CD14-positive monocyte (primary cell): ENCODE measurements at regions of chr20 and their contacts with region 1.

Region 1: GRCh38 chr20:62143118-62143973 is at the starts of genes PSMA7 and SS18L1:
- DNase-seq: peak; percentile 82 to 89 (median 88)
- H3K4me3 ChIP-seq: peak within 1 kb of the TSS; percentile 60 to 89 (median 69)
- H3K4me3 Mint-ChIP-seq: peak within 1 kb of the TSS; percentile 89 to 94
- H3K27ac ChIP-seq: peak within 1 kb of the TSS; percentile 75 to 89
- H3K27ac Mint-ChIP-seq: peak within 1 kb of the TSS; percentile 90 to 97 (median 94)
- H3K4me1 ChIP-seq: peaks cover 27 to 35% of the 10 kb centered on the region in 2 donors
- H3K4me1 Mint-ChIP-seq: peaks cover 42% of the 10 kb centered on the region
- H3K27me3 ChIP-seq: no peaks in the 10 kb centered on the region
- H3K27me3 Mint-ChIP-seq: no peaks in the 10 kb centered on the region
- CTCF ChIP-seq: no peak
- polyA plus RNA-seq, gene PSMA7: 402 to 668 (median 527) TPM
- polyA plus RNA-seq, gene SS18L1: 0.75 to 16.5 (median 1.1) TPM

Region 2: DNA sequence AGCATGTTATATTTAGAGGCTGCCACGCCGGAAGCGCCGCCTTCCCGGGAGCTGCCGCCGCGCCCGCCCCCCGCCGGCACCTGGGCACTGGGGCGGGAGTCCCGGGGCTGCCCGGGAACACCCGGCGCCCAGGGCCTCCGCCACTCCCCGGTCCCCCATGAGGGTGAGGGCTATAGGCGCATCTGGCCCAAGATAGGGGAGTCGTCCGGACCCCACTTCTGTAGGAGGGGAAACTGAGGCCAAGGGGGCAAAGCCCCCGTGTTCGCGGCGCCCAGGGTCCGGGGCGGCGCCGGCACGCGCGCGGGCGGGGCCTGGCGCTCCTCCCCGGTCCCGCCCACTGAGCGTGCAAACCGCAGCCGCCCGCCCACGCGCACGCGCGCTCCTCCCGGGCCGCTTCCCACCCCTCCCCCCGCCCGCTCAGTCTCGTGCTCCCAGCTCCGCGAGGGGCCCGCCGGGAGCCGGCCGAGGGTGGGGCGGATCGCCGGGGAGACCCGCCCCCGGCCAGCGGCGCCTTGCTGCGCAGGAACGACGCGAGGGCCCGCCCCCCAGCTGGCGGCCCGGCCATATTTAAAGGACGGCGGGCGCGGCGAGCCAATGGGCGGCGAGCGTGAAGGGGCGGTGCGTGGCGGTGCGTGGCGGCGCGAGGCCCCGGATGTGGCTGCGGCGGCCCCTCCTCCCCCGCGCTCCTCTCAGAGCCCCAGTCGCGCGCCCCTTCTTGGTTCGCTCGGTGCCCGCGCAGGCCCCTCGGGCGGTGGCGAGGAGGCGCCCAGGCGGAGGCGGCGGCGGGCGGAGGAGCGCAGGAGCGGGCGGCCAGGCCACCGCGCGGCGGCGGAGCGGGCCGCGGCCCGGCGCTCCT is 21.3 kb before region 1 on chr20 and contains the start of gene LSM14B:
- intact Hi-C with region 1: loop called in 1 of 2 experiments (anchors 2 kb)
- DNase-seq: peak; percentile 94 to 97 (median 96)
- H3K4me3 ChIP-seq: peak within 1 kb of the TSS; percentile 52 to 87 (median 71)
- H3K4me3 Mint-ChIP-seq: peak within 1 kb of the TSS; percentile 85 to 93
- H3K27ac ChIP-seq: peak within 1 kb of the TSS; percentile 65 to 94
- H3K27ac Mint-ChIP-seq: peak within 1 kb of the TSS; percentile 88 to 95 (median 93)
- H3K4me1 ChIP-seq: peaks cover 17 to 27% of the 10 kb centered on the region in 2 donors
- H3K4me1 Mint-ChIP-seq: peaks cover 19% of the 10 kb centered on the region
- H3K27me3 ChIP-seq: peaks cover 0 to 5% of the 10 kb centered on the region in 2 donors
- H3K27me3 Mint-ChIP-seq: peaks cover 9 to 24% (median 18%) of the 10 kb centered on the region in 3 donors
- CTCF ChIP-seq: no peak
- polyA plus RNA-seq, gene LSM14B: 1.0 to 33.5 (median 1.4) TPM

Region 3: DNA sequence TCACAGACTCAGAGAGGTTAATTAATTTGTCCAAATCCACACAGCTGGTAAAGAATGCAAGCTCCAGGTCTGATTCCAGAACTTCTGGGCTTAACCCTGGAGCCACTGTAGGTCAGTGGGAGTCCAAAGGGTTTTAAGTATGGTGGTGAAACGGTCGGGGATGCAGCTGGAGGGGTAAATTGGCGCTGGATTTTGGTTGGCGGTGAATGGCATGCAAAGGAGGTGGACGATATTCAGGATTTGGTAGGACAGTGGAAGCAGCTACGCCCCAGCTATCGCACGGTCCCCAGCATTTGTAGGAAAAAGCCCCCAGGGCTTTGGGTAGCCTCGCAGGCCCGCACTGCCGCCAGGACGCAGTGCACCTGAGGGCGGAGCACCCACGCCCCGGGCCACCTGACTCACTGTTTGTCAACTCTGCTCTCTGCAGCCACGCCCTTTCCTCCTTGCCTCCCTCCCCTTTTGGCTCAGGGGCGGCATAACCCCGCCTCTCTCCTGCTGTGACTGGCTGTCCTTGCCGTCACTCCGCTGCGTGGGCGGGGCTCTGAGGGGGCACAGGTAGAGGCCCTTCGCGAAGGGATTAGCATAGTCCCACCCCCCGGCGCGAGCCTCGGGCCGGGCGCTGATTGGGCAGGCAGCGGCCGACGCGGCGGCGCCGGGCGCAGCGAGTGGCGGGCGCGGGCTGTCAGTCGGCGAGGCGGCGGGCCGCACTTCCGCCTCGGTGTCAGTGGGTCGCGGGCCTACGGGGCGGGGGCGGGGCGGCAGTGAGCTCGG is 94.6 kb after region 1 on chr20 and contains the start of gene OSBPL2:
- intact Hi-C with region 1: loop called in 1 of 2 experiments (anchors 5 kb)
- DNase-seq: peak; percentile 97 to 99 (median 99)
- H3K4me3 ChIP-seq: peak within 1 kb of the TSS; percentile 64 to 82 (median 70)
- H3K4me3 Mint-ChIP-seq: peak within 1 kb of the TSS; percentile 82 to 93
- H3K27ac ChIP-seq: peak within 1 kb of the TSS; percentile 32 to 79
- H3K27ac Mint-ChIP-seq: peak within 1 kb of the TSS; percentile 71 to 93 (median 83)
- H3K4me1 ChIP-seq: peaks cover 28 to 38% of the 10 kb centered on the region in 2 donors
- H3K4me1 Mint-ChIP-seq: peaks cover 34% of the 10 kb centered on the region
- H3K27me3 ChIP-seq: no peaks in the 10 kb centered on the region
- H3K27me3 Mint-ChIP-seq: peaks cover 1 to 3% (median 2%) of the 10 kb centered on the region in 3 donors
- CTCF ChIP-seq: no peak
- polyA plus RNA-seq, gene OSBPL2: 12.9 to 29.1 (median 17.9) TPM

Region 4: GRCh38 chr20:62808211-62808865 is 665.0 kb after region 1 on chr20:
- intact Hi-C with region 1: loop called in 1 of 2 experiments (anchors 10 kb)
- DNase-seq: peak; percentile 53 to 69 (median 64)
- H3K4me3 ChIP-seq: no peak overlapping the region
- H3K4me3 Mint-ChIP-seq: no peak overlapping the region
- H3K27ac ChIP-seq: peak overlapping the region in 1 of 2 donors; percentile 15
- H3K27ac Mint-ChIP-seq: peak overlapping the region in 4 of 7 donors; percentile 12 to 71 (median 44)
- H3K4me1 ChIP-seq: peaks cover 40 to 43% of the 10 kb centered on the region in 2 donors
- H3K4me1 Mint-ChIP-seq: peaks cover 35% of the 10 kb centered on the region
- H3K27me3 ChIP-seq: no peaks in the 10 kb centered on the region
- H3K27me3 Mint-ChIP-seq: peaks cover 0 to 13% (median 7%) of the 10 kb centered on the region in 3 donors
- CTCF ChIP-seq: peak; percentile 95